ENCODE measurements at regions of chr10 and their contacts with region 1.

Region 1: DNA sequence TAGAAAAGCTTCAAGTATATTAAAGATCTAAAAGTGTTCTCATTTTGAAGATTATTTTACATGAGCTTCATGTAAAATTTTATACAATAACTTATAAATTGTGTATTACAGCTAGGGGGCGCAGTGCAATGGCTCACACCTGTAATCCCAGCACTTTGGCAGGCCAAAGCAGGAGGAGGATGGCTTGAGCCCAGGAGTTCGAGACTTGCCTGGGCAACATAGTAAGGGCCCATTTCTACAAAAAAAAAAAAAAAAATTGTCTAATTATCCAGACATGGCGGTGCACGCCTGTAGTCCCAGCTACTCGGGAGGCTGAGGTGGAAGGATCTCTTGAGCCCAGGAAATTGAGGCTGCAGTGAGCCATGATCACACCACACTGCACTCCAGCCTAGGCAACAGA is 16.6 kb downstream of the ACBD5 start:
- DNase-seq: peak in 1 of 2 donors; percentile 17
- ATAC-seq: peak in 2 of 4 donors; percentile 46 to 61
- H3K4me3 ChIP-seq: no peak overlapping the region
- H3K27ac ChIP-seq: no peak overlapping the region
- H3K4me1 ChIP-seq: peaks cover 5% of the 10 kb centered on the region
- H3K27me3 ChIP-seq: no peaks in the 10 kb centered on the region
- CTCF ChIP-seq: peak; percentile 46

Region 2: DNA sequence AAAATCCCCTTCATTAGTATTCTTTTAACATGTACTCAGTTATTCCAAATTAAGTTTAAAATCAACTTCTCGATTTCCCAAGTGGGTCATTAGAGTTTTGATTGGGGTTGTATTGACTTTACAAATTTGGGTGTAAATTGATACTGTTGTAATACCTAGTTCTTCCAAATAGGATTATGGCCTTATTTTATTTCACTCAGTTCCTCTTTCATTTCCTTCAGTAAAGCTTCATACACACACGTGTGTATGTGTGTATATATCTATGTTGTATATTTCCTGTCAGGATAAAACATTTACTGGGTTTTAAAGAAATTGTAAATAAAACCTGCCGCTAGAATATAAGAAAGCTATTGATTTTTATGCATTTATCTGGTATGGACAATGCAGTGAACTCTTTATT is 85.7 kb before region 1 on chr10:
- intact Hi-C with region 1: loop called in 1 of 2 experiments (anchors 10 kb)
- DNase-seq: no peak
- ATAC-seq: no peak
- H3K4me3 ChIP-seq: no peak overlapping the region
- H3K27ac ChIP-seq: no peak overlapping the region
- H3K4me1 ChIP-seq: no peaks in the 10 kb centered on the region
- H3K27me3 ChIP-seq: no peaks in the 10 kb centered on the region
- CTCF ChIP-seq: no peak

Region 3: DNA sequence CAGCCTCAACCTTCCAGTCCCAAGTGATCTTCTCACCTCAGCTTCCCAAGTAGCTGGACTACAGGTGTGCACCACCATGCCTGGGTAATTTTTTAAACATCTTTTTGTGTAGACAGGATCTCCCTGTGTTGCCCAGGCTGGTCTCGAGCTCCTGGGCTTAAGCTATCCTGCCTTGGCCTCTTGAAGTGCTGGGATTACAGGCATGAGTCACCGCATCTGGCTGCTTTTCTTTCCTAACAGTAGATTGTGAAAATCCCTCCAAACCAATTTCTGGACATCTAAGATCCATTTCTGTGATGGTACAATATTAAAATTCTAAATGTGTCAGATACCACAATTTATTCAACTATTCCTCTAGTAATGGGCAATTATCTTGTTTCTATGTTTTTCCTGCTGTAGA is 318.8 kb after region 1 on chr10:
- intact Hi-C with region 1: no loop called
- DNase-seq: no peak
- ATAC-seq: peak in 1 of 4 donors; percentile 64
- H3K4me3 ChIP-seq: no peak overlapping the region
- H3K27ac ChIP-seq: no peak overlapping the region
- H3K4me1 ChIP-seq: no peaks in the 10 kb centered on the region
- H3K27me3 ChIP-seq: no peaks in the 10 kb centered on the region
- CTCF ChIP-seq: no peak